Endothelial cell of umbilical vein (primary cell): ENCODE measurements at regions of chr3 and their contacts with region 1.

Region 1: DNA sequence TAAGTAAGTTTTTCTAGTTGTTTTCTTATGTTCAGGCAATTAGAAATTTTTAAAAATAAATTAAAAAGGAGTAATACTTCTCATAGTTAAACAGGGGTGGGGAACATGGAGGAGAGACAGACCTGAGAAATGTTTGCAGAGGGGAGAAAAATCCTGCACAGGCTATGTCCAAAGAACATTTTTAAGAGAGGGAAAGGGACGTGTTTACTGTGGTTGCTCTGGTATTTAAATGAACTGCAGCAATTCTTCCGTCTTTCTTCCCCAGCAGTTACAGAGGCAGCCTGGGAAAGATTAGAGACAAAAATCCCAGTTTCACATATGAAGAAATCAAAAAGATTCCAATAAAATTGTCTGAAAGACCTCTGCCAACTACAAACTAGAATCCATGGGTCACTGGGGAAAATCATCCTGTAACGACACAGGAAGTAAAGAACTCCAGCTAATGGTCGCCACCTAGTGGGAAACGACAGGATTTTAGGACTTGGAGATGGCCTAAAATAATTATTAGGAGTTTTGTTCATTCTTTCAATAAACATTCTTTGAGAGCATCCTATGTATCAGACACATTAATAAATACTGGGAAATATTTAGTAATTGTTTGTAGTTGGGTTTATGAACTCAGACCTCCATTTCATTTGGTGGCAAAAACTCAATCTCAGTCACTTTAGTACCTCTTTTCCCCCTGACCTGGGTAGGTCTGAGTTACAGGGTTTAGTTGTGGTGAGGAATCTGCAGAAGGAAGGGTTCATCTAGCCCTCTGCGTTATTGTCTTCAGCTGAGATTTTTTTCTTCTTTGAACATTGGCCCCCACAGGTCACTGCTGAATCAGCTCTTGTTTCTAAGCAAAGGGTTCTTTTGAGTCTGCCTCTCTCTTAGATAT is 69.9 kb upstream of the GOLIM4 start:
- DNase-seq: peak; percentile 65
- H3K4me3 ChIP-seq: no peak overlapping the region
- H3K27ac ChIP-seq: no peak overlapping the region
- H3K4me1 ChIP-seq: no peaks in the 10 kb centered on the region
- H3K27me3 ChIP-seq: no peaks in the 10 kb centered on the region
- CTCF ChIP-seq: peak; percentile 54 to 65
- POLR2A ChIP-seq: no peak

Region 2: GRCh38 chr3:167380004-167380689 is 785.5 kb before region 1 on chr3 and contains the start of gene ZBBX:
- CTCF ChIA-PET with region 1: no interaction called
- POLR2A ChIA-PET with region 1: no interaction called
- dilution Hi-C with region 1: no loop called
- intact Hi-C with region 1: loop called (anchors 10 kb)
- DNase-seq: peak; percentile 89
- H3K4me3 ChIP-seq: peak within 1 kb of the TSS in 2 of 3 experiments; percentile 55 to 57
- H3K27ac ChIP-seq: no peak within 1 kb of the TSS
- H3K4me1 ChIP-seq: no peaks in the 10 kb centered on the region
- H3K27me3 ChIP-seq: no peaks in the 10 kb centered on the region
- CTCF ChIP-seq: peak; percentile 87 to 95
- POLR2A ChIP-seq: no peak
- total RNA-seq, gene ZBBX: not detected in 2 replicates

Region 3: GRCh38 chr3:167929968-167930367 is 235.7 kb before region 1 on chr3:
- CTCF ChIA-PET with region 1: interaction called, 14 read pairs
- POLR2A ChIA-PET with region 1: no interaction called
- dilution Hi-C with region 1: no loop called
- intact Hi-C with region 1: loop called (anchors 1 kb)
- DNase-seq: no peak
- H3K4me3 ChIP-seq: no peak overlapping the region
- H3K27ac ChIP-seq: no peak overlapping the region
- H3K4me1 ChIP-seq: no peaks in the 10 kb centered on the region
- H3K27me3 ChIP-seq: peaks cover 0 to 4% of the 10 kb centered on the region in 2 experiments
- CTCF ChIP-seq: no peak
- POLR2A ChIP-seq: no peak

Region 4: GRCh38 chr3:168040607-168041208 is 124.9 kb before region 1 on chr3:
- CTCF ChIA-PET with region 1: interaction called, 190 read pairs
- POLR2A ChIA-PET with region 1: no interaction called
- dilution Hi-C with region 1: no loop called
- intact Hi-C with region 1: no loop called
- DNase-seq: peak; percentile 37
- H3K4me3 ChIP-seq: no peak overlapping the region
- H3K27ac ChIP-seq: no peak overlapping the region
- H3K4me1 ChIP-seq: peaks cover 6% of the 10 kb centered on the region
- H3K27me3 ChIP-seq: no peaks in the 10 kb centered on the region
- CTCF ChIP-seq: peak; percentile 51 to 63
- POLR2A ChIP-seq: no peak

Region 5: DNA sequence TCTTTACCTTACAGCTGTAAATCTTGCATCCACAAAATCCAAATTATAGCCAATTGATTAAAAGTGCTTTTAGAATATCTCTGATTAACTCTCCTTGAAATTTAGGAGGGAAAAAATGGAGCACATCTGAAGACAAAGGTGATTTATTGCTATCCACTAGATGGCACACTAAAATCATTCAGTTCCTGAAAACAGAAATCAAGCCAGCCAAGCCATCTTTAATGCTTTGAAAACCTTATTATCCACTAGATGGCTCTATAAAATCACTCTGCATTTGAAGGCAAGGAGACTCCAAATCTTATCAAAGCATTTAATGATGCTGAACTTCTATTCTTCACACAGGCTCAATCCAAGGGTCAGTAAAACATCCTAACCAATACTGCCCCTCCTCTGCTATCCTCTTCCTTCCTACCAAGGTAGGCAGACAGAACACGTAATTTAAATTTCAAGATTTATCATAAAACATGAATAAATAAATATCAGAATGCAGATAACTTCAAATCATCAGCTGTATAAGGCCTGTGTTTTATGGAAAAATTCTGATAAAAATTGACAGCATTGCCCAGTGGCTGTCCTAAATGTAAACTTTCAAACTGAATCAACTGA is 118.3 kb before region 1 on chr3:
- CTCF ChIA-PET with region 1: interaction called, 190 read pairs
- POLR2A ChIA-PET with region 1: no interaction called
- dilution Hi-C with region 1: no loop called
- intact Hi-C with region 1: loop called (anchors 1 kb)
- DNase-seq: peak; percentile 83
- H3K4me3 ChIP-seq: no peak overlapping the region
- H3K27ac ChIP-seq: no peak overlapping the region
- H3K4me1 ChIP-seq: peaks cover 6% of the 10 kb centered on the region
- H3K27me3 ChIP-seq: no peaks in the 10 kb centered on the region
- CTCF ChIP-seq: peak; percentile 59
- POLR2A ChIP-seq: no peak

Region 6: GRCh38 chr3:168095611-168096209 is 69.9 kb before region 1 on chr3 and contains the start of gene GOLIM4:
- CTCF ChIA-PET with region 1: interaction called, 5 read pairs
- POLR2A ChIA-PET with region 1: no interaction called
- dilution Hi-C with region 1: no loop called
- intact Hi-C with region 1: loop called (anchors 1 kb)
- DNase-seq: peak; percentile 97
- H3K4me3 ChIP-seq: peak within 1 kb of the TSS; percentile 49 to 82 (median 78)
- H3K27ac ChIP-seq: peak within 1 kb of the TSS; percentile 73
- H3K4me1 ChIP-seq: peaks cover 21% of the 10 kb centered on the region
- H3K27me3 ChIP-seq: no peaks in the 10 kb centered on the region
- CTCF ChIP-seq: no peak
- POLR2A ChIP-seq: peak; percentile 72
- total RNA-seq, gene GOLIM4: 39.7 and 40.8 TPM in 2 replicates

Region 7: GRCh38 chr3:168186293-168186983 is 20.8 kb after region 1 on chr3:
- CTCF ChIA-PET with region 1: interaction called, 10 read pairs
- POLR2A ChIA-PET with region 1: no interaction called
- dilution Hi-C with region 1: no loop called
- intact Hi-C with region 1: no loop called
- DNase-seq: no peak
- H3K4me3 ChIP-seq: no peak overlapping the region
- H3K27ac ChIP-seq: no peak overlapping the region
- H3K4me1 ChIP-seq: no peaks in the 10 kb centered on the region
- H3K27me3 ChIP-seq: peaks cover 0 to 3% of the 10 kb centered on the region in 2 experiments
- CTCF ChIP-seq: no peak
- POLR2A ChIP-seq: no peak

Region 8: GRCh38 chr3:168260859-168261258 is 95.2 kb after region 1 on chr3:
- CTCF ChIA-PET with region 1: no interaction called
- POLR2A ChIA-PET with region 1: no interaction called
- dilution Hi-C with region 1: no loop called
- intact Hi-C with region 1: no loop called
- DNase-seq: no peak
- H3K4me3 ChIP-seq: no peak overlapping the region
- H3K27ac ChIP-seq: no peak overlapping the region
- H3K4me1 ChIP-seq: no peaks in the 10 kb centered on the region
- H3K27me3 ChIP-seq: peaks cover 0 to 2% of the 10 kb centered on the region in 2 experiments
- CTCF ChIP-seq: no peak
- POLR2A ChIP-seq: no peak